Activated naive CD4-positive, alpha-beta T cell treated with anti-CD3 and anti-CD28 coated beads for 36 hours (primary cell): ENCODE measurements at regions of chr19 and their contacts with region 1.

Region 1: GRCh38 chr19:44800461-44800860 is 8.4 kb upstream of the BCAM start:
- DNase-seq: peak; percentile 88
- H3K4me3 Mint-ChIP-seq: no peak overlapping the region
- H3K27ac Mint-ChIP-seq: no peak overlapping the region
- H3K4me1 Mint-ChIP-seq: peaks cover 17% of the 10 kb centered on the region
- H3K27me3 Mint-ChIP-seq: no peaks in the 10 kb centered on the region

Region 2: GRCh38 chr19:44603201-44603950 is 197.1 kb before region 1 on chr19:
- CTCF ChIA-PET with region 1: no interaction called
- intact Hi-C with region 1: no loop called
- DNase-seq: no peak
- H3K4me3 Mint-ChIP-seq: no peak overlapping the region
- H3K27ac Mint-ChIP-seq: no peak overlapping the region
- H3K4me1 Mint-ChIP-seq: peaks cover 16% of the 10 kb centered on the region
- H3K27me3 Mint-ChIP-seq: no peaks in the 10 kb centered on the region

Region 3: GRCh38 chr19:44782729-44783128 is 17.7 kb before region 1 on chr19:
- CTCF ChIA-PET with region 1: interaction called, 18 read pairs
- intact Hi-C with region 1: no loop called
- DNase-seq: no peak
- H3K4me3 Mint-ChIP-seq: no peak overlapping the region
- H3K27ac Mint-ChIP-seq: no peak overlapping the region
- H3K4me1 Mint-ChIP-seq: peaks cover 4% of the 10 kb centered on the region
- H3K27me3 Mint-ChIP-seq: peaks cover 10% of the 10 kb centered on the region

Region 4: GRCh38 chr19:44851427-44851826 is 51.0 kb after region 1 on chr19:
- CTCF ChIA-PET with region 1: no interaction called
- intact Hi-C with region 1: no loop called
- DNase-seq: no peak
- H3K4me3 Mint-ChIP-seq: no peak overlapping the region
- H3K27ac Mint-ChIP-seq: no peak overlapping the region
- H3K4me1 Mint-ChIP-seq: peaks cover 9% of the 10 kb centered on the region
- H3K27me3 Mint-ChIP-seq: peaks cover 13% of the 10 kb centered on the region

Region 5: GRCh38 chr19:44869733-44870470 is 69.4 kb after region 1 on chr19:
- CTCF ChIA-PET with region 1: no interaction called
- intact Hi-C with region 1: no loop called
- DNase-seq: no peak
- H3K4me3 Mint-ChIP-seq: no peak overlapping the region
- H3K27ac Mint-ChIP-seq: no peak overlapping the region
- H3K4me1 Mint-ChIP-seq: no peaks in the 10 kb centered on the region
- H3K27me3 Mint-ChIP-seq: no peaks in the 10 kb centered on the region

Region 6: GRCh38 chr19:44954824-44955586 is 154.5 kb after region 1 on chr19 and contains the start of gene CLPTM1:
- CTCF ChIA-PET with region 1: no interaction called
- intact Hi-C with region 1: loop called (anchors 5 kb)
- DNase-seq: peak; percentile 98
- H3K4me3 Mint-ChIP-seq: peak within 1 kb of the TSS; percentile 98
- H3K27ac Mint-ChIP-seq: peak within 1 kb of the TSS; percentile 98
- H3K4me1 Mint-ChIP-seq: peaks cover 48% of the 10 kb centered on the region
- H3K27me3 Mint-ChIP-seq: no peaks in the 10 kb centered on the region
- total RNA-seq, gene CLPTM1: 32.4 to 34.6 TPM